ENCODE measurements at regions of chr6 and their contacts with region 1.

Region 1: GRCh38 chr6:16770701-16771569 is 9.7 kb upstream of the ATXN1 start:
- DNase-seq: peak; percentile 85
- ATAC-seq: peak; percentile 87

Region 2: DNA sequence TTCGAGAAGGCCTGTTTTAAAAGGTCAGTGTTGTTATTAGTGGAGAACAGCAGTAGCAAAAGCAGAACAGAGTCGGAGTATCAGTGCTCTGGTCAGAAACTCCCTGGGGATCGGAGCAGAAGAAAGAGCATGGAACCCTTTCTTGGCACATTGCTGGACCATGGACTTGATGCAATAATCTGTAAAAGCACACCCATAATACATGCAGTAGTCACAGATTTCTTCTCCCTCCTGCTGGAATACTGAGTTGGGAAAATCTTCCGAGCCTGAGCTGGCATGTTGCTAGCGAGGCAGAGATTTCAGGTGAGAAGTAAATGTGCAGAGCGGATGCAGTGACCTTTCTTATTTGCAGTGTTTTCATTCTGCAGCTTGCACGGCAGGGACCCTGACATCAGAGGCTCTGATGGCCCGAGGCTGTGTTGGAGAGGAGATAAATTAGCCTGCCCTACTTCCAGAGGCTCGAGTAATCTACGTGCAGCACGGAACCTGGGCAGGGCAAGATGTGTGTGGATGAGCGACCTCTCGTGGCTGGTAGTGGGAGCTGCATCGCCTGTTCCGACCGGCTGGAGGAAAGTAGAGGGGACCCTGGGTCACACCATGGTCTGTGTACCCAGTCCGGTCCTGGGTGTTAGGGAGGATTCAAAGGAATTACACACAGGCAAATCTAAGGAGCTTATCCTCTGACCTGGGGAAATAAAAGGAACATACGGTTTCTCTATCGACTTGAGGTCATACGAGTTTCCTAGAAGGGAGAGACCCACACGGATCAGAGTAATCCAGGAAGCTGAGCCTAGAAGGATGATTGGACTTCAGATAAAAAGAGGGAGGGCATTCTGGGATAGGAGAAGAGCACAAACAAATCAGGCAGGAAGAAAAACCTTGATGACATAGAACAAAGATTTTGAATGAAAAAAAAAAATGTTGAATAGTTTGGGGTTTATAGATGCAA is 193.9 kb after region 1 on chr6:
- intact Hi-C with region 1: loop called (anchors 10 kb)
- DNase-seq: peak; percentile 77
- ATAC-seq: peak; percentile 94